HAP-1 (cell line): ENCODE measurements at regions of chr13 and their contacts with region 1.

Region 1: GRCh38 chr13:48769107-48769704 is 115.5 kb downstream of the CYSLTR2 start:
- DNase-seq: peak; percentile 83 to 92
- H3K4me3 ChIP-seq: no peak overlapping the region
- H3K4me1 ChIP-seq: no peaks in the 10 kb centered on the region
- H3K27me3 ChIP-seq: no peaks in the 10 kb centered on the region

Region 2: GRCh38 chr13:46831588-46832194 is 1937.5 kb before region 1 on chr13:
- in situ Hi-C with region 1: loop called (anchors 25 kb)
- DNase-seq: peak; percentile 24 to 69
- H3K4me3 ChIP-seq: no peak overlapping the region
- H3K4me1 ChIP-seq: no peaks in the 10 kb centered on the region
- H3K27me3 ChIP-seq: peaks cover 5% of the 10 kb centered on the region; the same call in 1 of the 2 replicates

Region 3: DNA sequence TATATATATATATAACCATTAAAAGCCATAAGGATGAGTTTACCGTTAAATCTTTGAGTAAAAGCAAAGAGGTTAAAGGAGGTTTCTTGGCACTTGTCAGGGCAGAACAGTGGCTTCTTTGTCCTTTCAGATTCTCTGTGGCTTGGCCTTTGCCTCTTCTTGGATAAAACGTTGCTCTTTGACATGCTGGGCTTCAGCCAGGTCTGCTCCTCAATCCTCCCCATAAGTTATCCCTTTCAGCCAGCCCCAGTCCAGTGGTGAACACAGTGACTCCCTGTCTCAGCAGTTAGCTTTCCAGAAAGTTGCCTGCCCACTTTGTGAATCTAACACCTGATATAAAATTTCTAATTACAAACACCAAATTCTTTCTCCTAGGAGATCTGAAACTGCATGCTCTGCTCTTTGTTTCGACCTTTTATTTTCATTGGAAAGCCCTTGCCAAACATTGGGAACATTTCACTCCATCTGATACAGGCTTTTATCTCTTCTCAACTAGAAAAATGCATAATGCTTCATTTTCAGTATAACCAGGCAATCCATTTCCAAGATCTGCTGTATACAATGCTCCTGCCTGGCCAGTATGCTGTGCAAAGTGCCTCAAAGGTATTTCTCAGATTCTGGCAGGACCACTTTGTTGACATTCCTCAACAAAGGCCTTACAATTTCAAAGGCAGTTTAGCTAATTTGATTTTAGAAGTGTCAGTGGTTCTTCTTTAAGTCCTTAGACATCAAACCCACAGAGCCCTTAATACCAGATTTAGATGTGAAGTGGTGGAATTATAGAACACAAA is 658.1 kb before region 1 on chr13:
- in situ Hi-C with region 1: loop called (anchors 25 kb)
- DNase-seq: no peak
- H3K4me3 ChIP-seq: no peak overlapping the region
- H3K4me1 ChIP-seq: no peaks in the 10 kb centered on the region
- H3K27me3 ChIP-seq: no peaks in the 10 kb centered on the region; the same call in 1 of the 2 replicates

Region 4: DNA sequence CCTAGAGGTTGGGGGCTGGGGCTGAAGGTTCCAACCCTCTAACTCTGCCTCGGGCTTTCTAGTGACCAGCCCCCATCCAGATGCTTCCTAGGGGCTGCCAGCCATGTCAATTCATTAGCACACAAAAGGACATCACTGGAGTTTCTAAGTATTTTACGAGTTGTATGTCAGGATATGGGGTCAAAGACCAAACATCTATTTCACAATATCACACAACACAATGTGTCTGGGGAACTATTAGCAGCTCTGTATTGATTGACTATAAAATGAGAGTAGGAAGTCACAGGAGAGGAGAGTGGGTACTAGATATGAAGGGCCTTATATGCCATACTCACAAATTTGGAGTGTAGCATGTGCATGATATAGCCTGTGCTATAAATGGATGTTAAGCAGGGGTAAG is 398.4 kb before region 1 on chr13:
- in situ Hi-C with region 1: no loop called
- DNase-seq: no peak
- H3K4me3 ChIP-seq: no peak overlapping the region
- H3K4me1 ChIP-seq: no peaks in the 10 kb centered on the region
- H3K27me3 ChIP-seq: no peaks in the 10 kb centered on the region

Region 5: GRCh38 chr13:48595431-48596429 is 173.5 kb before region 1 on chr13:
- in situ Hi-C with region 1: loop called (anchors 10 kb)
- DNase-seq: peak; percentile 52 to 59
- H3K4me3 ChIP-seq: no peak overlapping the region
- H3K4me1 ChIP-seq: peaks cover 43% of the 10 kb centered on the region
- H3K27me3 ChIP-seq: no peaks in the 10 kb centered on the region